B cell (primary cell): ENCODE measurements at regions of chr1 and their contacts with region 1.

Region 1: GRCh38 chr1:20151906-20152598 is 12.9 kb downstream of the PLA2G2F start:
- DNase-seq: peak; percentile 86
- ATAC-seq: peak; percentile 97
- H3K4me3 ChIP-seq: peak overlapping the region in 4 of 5 experiments; percentile 52 to 69 (median 60)
- H3K4me3 Mint-ChIP-seq: peak overlapping the region; percentile 86
- H3K27ac ChIP-seq: peak overlapping the region in 1 of 2 donors; percentile 11
- H3K27ac Mint-ChIP-seq: peak overlapping the region; percentile 84
- H3K4me1 ChIP-seq: peaks cover 5 to 15% of the 10 kb centered on the region in 2 donors
- H3K4me1 Mint-ChIP-seq: peaks cover 20% of the 10 kb centered on the region
- H3K27me3 ChIP-seq: no peaks in the 10 kb centered on the region
- H3K27me3 Mint-ChIP-seq: no peaks in the 10 kb centered on the region
- CTCF ChIP-seq: peak; percentile 95

Region 2: DNA sequence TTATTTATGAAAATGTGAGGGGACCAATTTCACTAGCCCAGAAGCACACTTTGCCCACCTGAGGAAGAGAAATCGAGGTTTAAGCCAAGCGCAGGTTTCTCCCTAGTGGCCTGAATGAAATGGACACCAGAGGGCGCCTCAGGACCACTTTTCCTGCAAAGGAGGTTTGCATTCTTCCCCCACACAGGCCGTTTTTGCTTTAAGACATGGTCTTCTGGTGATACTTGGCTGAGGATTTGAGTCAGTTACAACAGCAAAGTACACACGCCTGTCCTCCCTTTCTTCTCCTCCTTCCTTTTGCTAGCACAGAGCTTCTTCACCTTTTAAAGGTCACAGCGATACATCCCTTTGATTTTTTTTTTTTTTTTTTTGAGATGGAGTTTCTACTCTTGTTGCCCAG is 234.0 kb before region 1 on chr1:
- CTCF ChIA-PET with region 1: interaction called, 126 read pairs
- POLR2A ChIA-PET with region 1: interaction called, 5 read pairs
- intact Hi-C with region 1: no loop called
- DNase-seq: peak; percentile 85
- ATAC-seq: peak; percentile 49
- H3K4me3 ChIP-seq: no peak overlapping the region
- H3K4me3 Mint-ChIP-seq: no peak overlapping the region
- H3K27ac ChIP-seq: no peak overlapping the region
- H3K27ac Mint-ChIP-seq: no peak overlapping the region
- H3K4me1 ChIP-seq: no peaks in the 10 kb centered on the region
- H3K4me1 Mint-ChIP-seq: peaks cover 4% of the 10 kb centered on the region
- H3K27me3 ChIP-seq: peaks cover 0 to 5% (median 0%) of the 10 kb centered on the region in 4 experiments
- H3K27me3 Mint-ChIP-seq: peaks cover 4% of the 10 kb centered on the region
- CTCF ChIP-seq: peak; percentile 86

Region 3: GRCh38 chr1:19974822-19975416 is 177.1 kb before region 1 on chr1:
- CTCF ChIA-PET with region 1: interaction called, 58 read pairs
- POLR2A ChIA-PET with region 1: no interaction called
- intact Hi-C with region 1: no loop called
- DNase-seq: peak; percentile 59
- ATAC-seq: peak; percentile 39
- H3K4me3 ChIP-seq: no peak overlapping the region
- H3K4me3 Mint-ChIP-seq: no peak overlapping the region
- H3K27ac ChIP-seq: no peak overlapping the region
- H3K27ac Mint-ChIP-seq: no peak overlapping the region
- H3K4me1 ChIP-seq: no peaks in the 10 kb centered on the region
- H3K4me1 Mint-ChIP-seq: peaks cover 2% of the 10 kb centered on the region
- H3K27me3 ChIP-seq: peaks cover 0 to 2% (median 0%) of the 10 kb centered on the region in 4 experiments
- H3K27me3 Mint-ChIP-seq: peaks cover 26% of the 10 kb centered on the region
- CTCF ChIP-seq: peak; percentile 48

Region 4: DNA sequence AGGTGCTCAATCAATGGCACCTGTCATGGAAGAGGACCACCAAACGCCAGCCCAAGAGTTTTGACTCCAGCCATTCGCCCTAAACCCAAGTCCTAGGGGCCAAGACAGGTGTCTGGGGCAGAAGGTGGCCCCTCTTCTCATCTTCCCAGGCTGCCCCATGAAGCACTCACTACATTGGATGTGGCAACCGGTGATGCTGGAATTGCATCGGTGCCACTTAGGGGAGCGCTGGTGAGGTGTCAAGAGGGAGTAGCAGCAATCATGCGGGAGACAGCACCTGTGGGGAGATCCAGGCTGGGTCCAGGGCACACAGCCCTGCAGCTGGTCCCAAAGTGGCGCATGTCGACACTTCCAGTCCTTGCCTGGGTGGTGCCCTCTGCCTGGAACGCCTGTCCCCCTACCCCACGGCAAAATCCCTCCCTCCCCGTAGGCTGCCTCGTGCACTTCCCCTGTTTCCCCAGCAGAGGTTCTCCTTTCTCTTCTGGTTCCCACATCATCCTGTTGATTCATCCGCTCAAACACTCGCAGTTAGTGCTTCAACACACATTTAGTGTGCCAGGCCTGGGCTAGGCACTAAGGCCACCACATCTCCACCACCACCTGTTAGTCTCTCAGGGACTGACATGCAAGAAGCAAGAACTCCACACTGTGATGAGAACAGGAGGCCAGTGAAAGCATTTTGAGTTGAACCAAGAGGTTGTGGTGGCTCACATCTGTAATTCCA is 51.3 kb before region 1 on chr1:
- CTCF ChIA-PET with region 1: interaction called, 105 read pairs
- POLR2A ChIA-PET with region 1: no interaction called
- intact Hi-C with region 1: no loop called
- DNase-seq: peak; percentile 74
- ATAC-seq: peak; percentile 94
- H3K4me3 ChIP-seq: no peak overlapping the region
- H3K4me3 Mint-ChIP-seq: no peak overlapping the region
- H3K27ac ChIP-seq: no peak overlapping the region
- H3K27ac Mint-ChIP-seq: no peak overlapping the region
- H3K4me1 ChIP-seq: peaks cover 5 to 8% of the 10 kb centered on the region in 2 donors
- H3K4me1 Mint-ChIP-seq: peaks cover 3% of the 10 kb centered on the region
- H3K27me3 ChIP-seq: no peaks in the 10 kb centered on the region
- H3K27me3 Mint-ChIP-seq: peaks cover 3% of the 10 kb centered on the region
- CTCF ChIP-seq: peak; percentile 80

Region 5: DNA sequence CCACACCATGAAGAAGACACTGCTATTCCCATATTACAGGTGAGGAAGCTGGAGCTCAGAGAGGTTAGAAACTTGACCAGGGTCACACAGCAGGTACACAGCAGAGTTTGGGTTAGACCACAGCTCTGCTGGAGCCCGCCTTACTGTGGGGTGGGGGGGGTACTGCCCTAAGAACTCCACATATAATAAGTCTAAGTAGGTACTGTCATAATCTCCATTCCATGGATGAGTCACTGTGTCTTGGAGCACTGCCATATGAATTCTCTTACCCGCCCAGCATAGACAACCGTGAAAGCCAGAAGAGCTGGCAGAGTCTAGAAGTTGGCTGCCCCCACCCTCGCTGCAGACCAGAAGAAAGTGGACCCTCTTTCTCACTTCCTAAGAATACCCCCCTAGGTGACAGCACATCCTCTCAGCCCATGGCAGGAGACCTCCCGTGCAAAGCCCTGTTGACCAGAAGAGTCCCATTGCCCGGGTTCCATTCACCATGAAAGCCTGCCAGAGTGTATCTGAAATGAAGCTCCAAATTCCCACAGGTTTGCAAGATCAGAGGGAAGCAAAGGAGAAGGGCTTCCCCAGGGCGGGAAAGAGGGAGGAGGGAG is 27.5 kb before region 1 on chr1:
- CTCF ChIA-PET with region 1: interaction called, 11 read pairs
- POLR2A ChIA-PET with region 1: interaction called, 4 read pairs
- intact Hi-C with region 1: no loop called
- DNase-seq: no peak
- ATAC-seq: no peak
- H3K4me3 ChIP-seq: no peak overlapping the region
- H3K4me3 Mint-ChIP-seq: no peak overlapping the region
- H3K27ac ChIP-seq: no peak overlapping the region
- H3K27ac Mint-ChIP-seq: no peak overlapping the region
- H3K4me1 ChIP-seq: peaks cover 33 to 48% of the 10 kb centered on the region in 2 donors
- H3K4me1 Mint-ChIP-seq: peaks cover 59% of the 10 kb centered on the region
- H3K27me3 ChIP-seq: no peaks in the 10 kb centered on the region
- H3K27me3 Mint-ChIP-seq: no peaks in the 10 kb centered on the region
- CTCF ChIP-seq: no peak

Region 6: GRCh38 chr1:20164694-20165202 is 12.7 kb after region 1 on chr1:
- CTCF ChIA-PET with region 1: interaction called, 14 read pairs
- POLR2A ChIA-PET with region 1: no interaction called
- intact Hi-C with region 1: no loop called
- DNase-seq: no peak
- ATAC-seq: no peak
- H3K4me3 ChIP-seq: no peak overlapping the region
- H3K4me3 Mint-ChIP-seq: no peak overlapping the region
- H3K27ac ChIP-seq: no peak overlapping the region
- H3K27ac Mint-ChIP-seq: no peak overlapping the region
- H3K4me1 ChIP-seq: no peaks in the 10 kb centered on the region
- H3K4me1 Mint-ChIP-seq: no peaks in the 10 kb centered on the region
- H3K27me3 ChIP-seq: peaks cover 0 to 10% (median 0%) of the 10 kb centered on the region in 4 experiments
- H3K27me3 Mint-ChIP-seq: peaks cover 24% of the 10 kb centered on the region
- CTCF ChIP-seq: no peak

Region 7: GRCh38 chr1:20174937-20175666 is 23.1 kb after region 1 on chr1:
- CTCF ChIA-PET with region 1: interaction called, 29 read pairs
- POLR2A ChIA-PET with region 1: no interaction called
- intact Hi-C with region 1: no loop called
- DNase-seq: no peak
- ATAC-seq: no peak
- H3K4me3 ChIP-seq: no peak overlapping the region
- H3K4me3 Mint-ChIP-seq: no peak overlapping the region
- H3K27ac ChIP-seq: no peak overlapping the region
- H3K27ac Mint-ChIP-seq: no peak overlapping the region
- H3K4me1 ChIP-seq: peaks cover 14 to 23% of the 10 kb centered on the region in 2 donors
- H3K4me1 Mint-ChIP-seq: peaks cover 22% of the 10 kb centered on the region
- H3K27me3 ChIP-seq: peaks cover 0 to 7% (median 0%) of the 10 kb centered on the region in 4 experiments
- H3K27me3 Mint-ChIP-seq: peaks cover under 1% of the 10 kb centered on the region
- CTCF ChIP-seq: no peak